A673 (cell line): ENCODE measurements at regions of chr16 and their contacts with region 1.

Region 1: GRCh38 chr16:52456368-52456767 is 90.6 kb downstream of the TOX3 start:
- DNase-seq: no peak
- H3K4me3 ChIP-seq: no peak overlapping the region
- H3K27ac ChIP-seq: no peak overlapping the region
- H3K4me1 ChIP-seq: peaks cover 35% of the 10 kb centered on the region
- H3K27me3 ChIP-seq: no peaks in the 10 kb centered on the region
- CTCF ChIP-seq: no peak

Region 2: DNA sequence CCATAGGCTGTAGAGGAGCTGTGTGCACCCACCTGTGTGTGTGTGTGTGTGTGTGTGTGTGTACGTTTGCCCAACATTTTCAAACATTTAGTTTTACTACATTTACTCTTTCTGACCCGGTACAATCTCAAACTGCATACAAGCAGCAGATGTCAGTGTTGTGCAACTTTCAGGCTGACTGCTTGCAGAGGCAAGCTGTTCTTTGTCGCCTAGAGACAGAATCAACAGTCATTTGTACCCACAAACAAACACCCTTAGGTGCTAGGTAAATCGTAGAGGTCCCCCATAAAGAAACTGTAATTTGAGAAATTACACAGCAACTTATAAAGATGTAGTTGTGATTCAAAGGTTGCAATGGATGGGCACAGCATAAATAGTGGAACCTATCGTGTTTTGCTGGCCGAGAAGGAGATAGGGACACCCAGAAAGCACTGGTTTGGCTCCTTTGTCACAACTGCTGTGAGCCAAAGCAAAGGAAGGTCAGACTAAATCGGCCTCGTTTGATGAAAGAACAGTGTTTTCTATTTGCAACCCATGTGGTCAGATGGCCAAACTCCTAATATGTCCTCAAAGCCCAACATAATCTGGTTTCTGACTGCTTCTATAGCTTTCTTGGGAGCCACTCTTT is 387.8 kb before region 1 on chr16:
- CTCF ChIA-PET with region 1: no interaction called
- POLR2A ChIA-PET with region 1: no interaction called
- intact Hi-C with region 1: loop called (anchors 10 kb)
- DNase-seq: peak; percentile 67
- H3K4me3 ChIP-seq: no peak overlapping the region
- H3K27ac ChIP-seq: no peak overlapping the region
- H3K4me1 ChIP-seq: peaks cover 3% of the 10 kb centered on the region
- H3K27me3 ChIP-seq: peaks cover 6% of the 10 kb centered on the region
- CTCF ChIP-seq: peak; percentile 60

Region 3: GRCh38 chr16:52383640-52384292 is 72.6 kb before region 1 on chr16:
- CTCF ChIA-PET with region 1: no interaction called
- POLR2A ChIA-PET with region 1: no interaction called
- intact Hi-C with region 1: no loop called
- DNase-seq: no peak
- H3K4me3 ChIP-seq: no peak overlapping the region
- H3K27ac ChIP-seq: no peak overlapping the region
- H3K4me1 ChIP-seq: no peaks in the 10 kb centered on the region
- H3K27me3 ChIP-seq: peaks cover 10% of the 10 kb centered on the region
- CTCF ChIP-seq: no peak

Region 4: GRCh38 chr16:52497067-52497816 is 40.9 kb after region 1 on chr16:
- CTCF ChIA-PET with region 1: no interaction called
- POLR2A ChIA-PET with region 1: no interaction called
- intact Hi-C with region 1: loop called (anchors 2 kb)
- DNase-seq: peak; percentile 94
- H3K4me3 ChIP-seq: no peak overlapping the region
- H3K27ac ChIP-seq: peak overlapping the region; percentile 78
- H3K4me1 ChIP-seq: peaks cover 61% of the 10 kb centered on the region
- H3K27me3 ChIP-seq: peaks cover 3% of the 10 kb centered on the region
- CTCF ChIP-seq: no peak

Region 5: DNA sequence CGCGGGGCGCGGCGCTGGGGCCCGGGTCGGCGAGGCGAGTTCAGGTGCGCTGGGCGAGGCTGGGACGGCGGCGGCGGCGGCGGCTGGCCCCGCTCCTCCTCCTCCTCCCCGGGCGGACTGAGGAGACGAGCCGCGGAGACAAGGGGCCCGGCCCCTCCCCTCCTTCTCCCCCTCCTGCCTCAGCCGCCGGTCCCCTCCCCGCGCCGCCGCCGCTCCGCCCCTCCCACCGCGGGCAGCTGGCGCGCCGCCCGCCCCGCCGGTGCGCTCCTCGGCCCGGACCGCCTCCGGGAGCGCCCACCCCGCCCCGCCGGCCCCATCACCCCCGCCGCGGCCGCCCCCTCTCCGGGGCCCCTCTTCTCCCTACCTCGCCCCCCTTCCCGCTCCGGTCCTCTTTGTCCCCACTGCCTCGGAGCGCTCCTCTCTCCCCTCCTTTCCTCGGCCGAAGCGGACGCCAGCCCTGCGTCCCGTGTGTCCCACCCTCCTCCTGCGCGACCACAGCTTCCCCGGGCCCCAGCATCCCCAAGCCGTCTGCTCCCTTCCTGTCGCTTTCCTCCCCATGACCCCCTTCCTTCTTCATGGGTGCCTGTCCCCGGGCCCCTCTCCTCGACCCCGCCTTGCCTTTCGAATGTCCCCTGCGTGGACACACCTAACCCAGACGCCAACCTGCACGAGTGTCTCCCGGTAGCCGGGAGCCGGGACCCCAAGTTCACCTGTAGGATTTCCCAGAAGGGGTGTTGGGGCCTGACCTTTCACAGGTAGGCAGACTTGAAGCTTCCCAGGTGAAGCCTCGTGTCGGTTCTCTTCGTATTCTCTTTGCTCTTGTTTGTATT is 90.9 kb after region 1 on chr16 and contains the start of gene TOX3:
- CTCF ChIA-PET with region 1: no interaction called
- POLR2A ChIA-PET with region 1: interaction called, 3 read pairs
- intact Hi-C with region 1: loop called (anchors 5 kb)
- DNase-seq: peak; percentile 46
- H3K4me3 ChIP-seq: peak within 1 kb of the TSS; percentile 66
- H3K27ac ChIP-seq: peak within 1 kb of the TSS; percentile 58
- H3K4me1 ChIP-seq: peaks cover 3% of the 10 kb centered on the region
- H3K27me3 ChIP-seq: peaks cover 68% of the 10 kb centered on the region
- CTCF ChIP-seq: no peak
- total RNA-seq, gene TOX3: 16.6 and 17.6 TPM in 2 replicates

Region 6: GRCh38 chr16:52581530-52581929 is 125.2 kb after region 1 on chr16:
- CTCF ChIA-PET with region 1: no interaction called
- POLR2A ChIA-PET with region 1: no interaction called
- intact Hi-C with region 1: no loop called
- DNase-seq: peak; percentile 58
- H3K4me3 ChIP-seq: no peak overlapping the region
- H3K27ac ChIP-seq: no peak overlapping the region
- H3K4me1 ChIP-seq: no peaks in the 10 kb centered on the region
- H3K27me3 ChIP-seq: no peaks in the 10 kb centered on the region
- CTCF ChIP-seq: peak; percentile 62

Region 7: DNA sequence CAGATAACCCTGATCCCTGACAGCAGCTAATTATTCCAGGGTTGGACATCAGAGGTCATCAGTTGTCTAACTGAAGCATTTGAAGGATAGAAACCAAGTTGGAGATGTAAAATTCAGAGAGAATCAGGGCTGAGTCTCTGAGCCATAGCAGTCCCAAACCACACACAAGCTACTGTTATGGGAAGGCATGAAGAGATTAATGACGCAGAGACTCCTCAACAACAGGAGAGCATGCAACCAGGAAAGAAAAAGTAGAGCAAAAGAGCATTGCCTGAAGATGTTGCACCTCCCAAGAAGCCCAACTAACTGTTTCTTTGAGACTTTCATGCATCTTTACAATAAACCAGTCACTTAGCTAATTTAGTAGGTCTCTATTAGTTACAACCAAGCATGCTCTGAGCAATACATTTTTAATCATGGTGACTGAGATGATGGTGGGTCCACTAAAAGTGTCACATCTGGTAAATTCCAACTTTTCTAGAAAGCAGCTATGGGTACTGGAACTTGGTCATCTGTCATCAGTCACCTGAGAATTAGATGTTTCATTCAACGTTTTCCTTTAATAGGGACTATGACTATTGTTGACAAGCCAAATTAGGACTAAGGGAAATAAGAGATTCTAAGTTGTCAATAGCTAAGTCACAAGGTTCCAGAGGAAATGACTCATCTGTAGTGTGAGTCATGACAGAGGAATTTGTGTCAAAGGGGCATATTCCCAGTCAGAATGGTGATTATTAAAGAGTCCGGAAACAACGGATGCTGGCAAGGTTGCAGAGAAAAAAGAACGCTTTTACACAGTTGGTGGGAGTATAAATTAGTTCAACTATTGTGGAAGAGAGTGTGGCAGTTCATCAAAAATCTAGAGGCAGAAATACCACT is 356.5 kb after region 1 on chr16:
- CTCF ChIA-PET with region 1: no interaction called
- POLR2A ChIA-PET with region 1: no interaction called
- intact Hi-C with region 1: loop called (anchors 2 kb)
- DNase-seq: peak; percentile 97
- H3K4me3 ChIP-seq: no peak overlapping the region
- H3K27ac ChIP-seq: peak overlapping the region; percentile 57
- H3K4me1 ChIP-seq: peaks cover 18% of the 10 kb centered on the region
- H3K27me3 ChIP-seq: no peaks in the 10 kb centered on the region
- CTCF ChIP-seq: no peak

Region 8: DNA sequence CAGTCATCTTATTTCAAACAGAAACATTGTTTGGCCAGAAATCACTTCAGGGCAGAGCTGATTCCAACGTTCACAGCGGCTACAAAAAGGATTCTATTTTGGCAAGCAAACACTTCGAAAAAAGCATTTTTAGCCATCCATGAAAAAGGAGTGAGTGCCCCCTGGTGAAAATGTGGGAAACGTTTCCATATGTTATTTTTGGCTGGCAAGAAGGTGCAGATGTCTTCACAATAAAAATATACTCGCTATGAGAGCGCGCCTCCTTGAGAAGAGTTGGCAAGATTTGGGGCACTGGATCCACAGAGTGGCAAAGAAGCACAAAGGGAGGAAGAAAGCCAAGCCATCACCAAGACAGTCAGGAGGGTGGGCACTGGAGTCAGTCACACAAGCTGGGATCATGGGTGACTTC is 405.2 kb after region 1 on chr16:
- CTCF ChIA-PET with region 1: no interaction called
- POLR2A ChIA-PET with region 1: no interaction called
- intact Hi-C with region 1: loop called (anchors 10 kb)
- DNase-seq: peak; percentile 80
- H3K4me3 ChIP-seq: no peak overlapping the region
- H3K27ac ChIP-seq: no peak overlapping the region
- H3K4me1 ChIP-seq: peaks cover 4% of the 10 kb centered on the region
- H3K27me3 ChIP-seq: peaks cover 24% of the 10 kb centered on the region
- CTCF ChIP-seq: peak; percentile 71